Heart left ventricle (tissue), 16 donors: ENCODE measurements at regions of chr2 and their contacts with region 1.

Region 1: GRCh38 chr2:69907216-69907615 is 7.7 kb upstream of the MXD1 start:
- DNase-seq: no peak
- ATAC-seq: no peak
- H3K4me3 ChIP-seq: no peak overlapping the region
- H3K27ac ChIP-seq: no peak overlapping the region
- H3K4me1 ChIP-seq: peaks cover 0 to 6% (median 0%) of the 10 kb centered on the region in 12 donors
- H3K27me3 ChIP-seq: no peaks in the 10 kb centered on the region
- CTCF ChIP-seq: no peak
- POLR2A ChIP-seq: no peak

Region 2: DNA sequence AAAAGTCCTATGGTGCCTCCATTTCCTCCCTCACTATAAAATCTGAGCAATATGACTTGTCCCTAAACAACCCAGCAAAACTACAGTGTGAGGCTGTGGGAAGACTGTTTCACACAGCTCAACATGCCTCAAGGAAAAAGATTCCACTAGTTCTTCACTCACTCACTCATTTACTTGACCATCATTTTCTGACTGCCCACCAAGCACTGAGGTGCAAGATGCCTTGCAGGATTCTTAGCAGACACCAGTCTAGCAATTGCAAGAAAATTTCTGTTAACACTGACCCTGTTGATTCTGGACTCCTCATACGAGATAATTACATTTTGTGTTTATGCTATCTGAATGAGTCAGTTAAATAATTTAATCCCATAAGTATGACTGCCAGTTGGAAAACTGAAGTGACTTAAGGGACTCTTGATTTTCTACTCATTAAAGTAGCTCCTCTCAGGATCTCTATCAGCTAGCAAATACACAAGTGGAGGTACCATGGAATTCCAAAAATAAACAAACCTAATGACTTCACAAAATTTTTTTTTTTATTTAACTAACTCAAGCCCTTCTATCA is 128.2 kb after region 1 on chr2:
- intact Hi-C with region 1: no loop called
- DNase-seq: no peak
- ATAC-seq: no peak
- H3K4me3 ChIP-seq: no peak overlapping the region
- H3K27ac ChIP-seq: peak overlapping the region in 5 of 12 donors; percentile 14 to 78 (median 56)
- H3K4me1 ChIP-seq: peaks cover 0 to 36% (median 15%) of the 10 kb centered on the region in 12 donors
- H3K27me3 ChIP-seq: no peaks in the 10 kb centered on the region
- CTCF ChIP-seq: no peak
- POLR2A ChIP-seq: no peak

Region 3: DNA sequence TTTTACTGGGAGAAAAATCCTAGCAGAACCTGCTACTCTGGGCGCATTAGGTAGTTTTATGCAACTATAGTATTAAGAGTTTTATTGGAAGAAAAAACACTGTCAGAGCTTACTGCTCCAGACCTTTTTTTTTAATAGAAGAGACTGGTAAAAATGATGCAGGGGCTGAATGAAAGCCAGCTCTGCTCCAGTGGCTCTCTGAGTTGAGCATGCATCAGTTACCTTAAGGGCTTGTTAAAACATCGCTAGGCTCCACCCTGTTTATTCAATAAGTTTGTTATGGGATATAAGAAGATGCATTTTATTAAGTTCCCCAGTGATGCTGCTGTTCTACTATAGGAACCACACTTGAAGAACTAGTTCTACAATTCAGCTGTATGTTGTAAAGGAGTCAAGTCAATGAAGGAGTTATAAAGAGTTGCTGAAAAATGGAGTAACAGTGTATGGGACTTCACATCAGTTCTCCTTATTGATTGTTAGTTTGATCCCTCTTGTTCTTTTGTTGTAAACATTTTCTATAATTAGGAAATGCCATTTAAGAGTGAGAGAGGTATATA is 373.1 kb after region 1 on chr2:
- intact Hi-C with region 1: loop called in 1 of 10 experiments (anchors 5 kb)
- DNase-seq: no peak
- ATAC-seq: no peak
- H3K4me3 ChIP-seq: no peak overlapping the region
- H3K27ac ChIP-seq: no peak overlapping the region
- H3K4me1 ChIP-seq: peaks cover 0 to 28% (median 6%) of the 10 kb centered on the region in 12 donors
- H3K27me3 ChIP-seq: no peaks in the 10 kb centered on the region
- CTCF ChIP-seq: no peak
- POLR2A ChIP-seq: no peak